Thyroid gland (tissue), 4 donors: ENCODE measurements at regions of chr19 and their contacts with region 1.

Region 1: GRCh38 chr19:14347999-14348889 is 33.0 kb upstream of the ADGRE5 start:
- DNase-seq: peak; percentile 43 to 53
- H3K4me3 ChIP-seq: no peak overlapping the region
- H3K27ac ChIP-seq: no peak overlapping the region
- H3K4me1 ChIP-seq: peaks cover 0 to 6% of the 10 kb centered on the region in 2 donors
- H3K27me3 ChIP-seq: no peaks in the 10 kb centered on the region
- CTCF ChIP-seq: peak; percentile 60 to 93 (median 84)
- POLR2A ChIP-seq: no peak

Region 2: DNA sequence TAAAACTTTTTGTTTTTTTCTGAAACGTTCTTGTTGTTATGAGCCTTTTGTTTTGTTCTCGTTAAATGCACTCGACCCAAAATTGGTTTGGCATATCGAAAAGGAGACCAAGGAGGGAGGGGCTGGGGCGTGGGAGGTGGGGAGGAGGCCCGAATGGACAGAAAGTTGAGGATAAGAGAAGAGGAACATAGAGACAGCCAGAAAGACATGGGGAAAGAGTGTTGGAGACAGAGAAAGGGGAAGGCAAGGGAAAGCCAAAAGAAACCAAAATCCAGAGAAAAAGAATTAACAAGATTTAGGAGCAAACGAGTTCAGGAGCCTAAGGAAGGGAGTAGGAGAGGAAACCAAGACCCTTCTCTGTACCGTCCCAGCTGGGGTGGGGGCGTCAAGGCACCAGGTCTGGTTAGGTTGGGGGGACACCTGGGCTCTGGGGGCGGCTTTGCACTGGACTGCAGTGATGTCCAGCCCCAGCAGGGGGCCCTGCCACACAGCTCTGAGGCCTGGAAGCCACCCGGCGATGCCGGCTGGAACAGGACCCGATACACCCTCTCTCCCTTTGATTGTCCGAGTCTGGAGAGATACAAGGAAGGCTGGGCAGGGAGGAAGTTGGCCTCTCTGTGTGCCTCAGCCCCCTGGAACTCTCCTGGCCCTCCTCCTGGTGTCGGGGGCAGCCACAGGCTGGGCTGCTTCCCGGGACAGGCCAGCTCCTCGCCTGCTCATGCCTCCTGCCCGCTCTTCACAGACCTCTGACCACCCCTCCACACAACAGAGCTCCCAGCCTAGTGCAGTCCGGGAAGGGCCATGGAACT is 200.2 kb before region 1 on chr19:
- intact Hi-C with region 1: loop called (anchors 5 kb)
- DNase-seq: peak; percentile 75 to 78
- H3K4me3 ChIP-seq: no peak overlapping the region
- H3K27ac ChIP-seq: peak overlapping the region in 2 of 3 donors; percentile 30 to 70
- H3K4me1 ChIP-seq: peaks cover 12 to 33% of the 10 kb centered on the region in 2 donors
- H3K27me3 ChIP-seq: no peaks in the 10 kb centered on the region
- CTCF ChIP-seq: peak; percentile 50 to 89 (median 78)
- POLR2A ChIP-seq: no peak

Region 3: DNA sequence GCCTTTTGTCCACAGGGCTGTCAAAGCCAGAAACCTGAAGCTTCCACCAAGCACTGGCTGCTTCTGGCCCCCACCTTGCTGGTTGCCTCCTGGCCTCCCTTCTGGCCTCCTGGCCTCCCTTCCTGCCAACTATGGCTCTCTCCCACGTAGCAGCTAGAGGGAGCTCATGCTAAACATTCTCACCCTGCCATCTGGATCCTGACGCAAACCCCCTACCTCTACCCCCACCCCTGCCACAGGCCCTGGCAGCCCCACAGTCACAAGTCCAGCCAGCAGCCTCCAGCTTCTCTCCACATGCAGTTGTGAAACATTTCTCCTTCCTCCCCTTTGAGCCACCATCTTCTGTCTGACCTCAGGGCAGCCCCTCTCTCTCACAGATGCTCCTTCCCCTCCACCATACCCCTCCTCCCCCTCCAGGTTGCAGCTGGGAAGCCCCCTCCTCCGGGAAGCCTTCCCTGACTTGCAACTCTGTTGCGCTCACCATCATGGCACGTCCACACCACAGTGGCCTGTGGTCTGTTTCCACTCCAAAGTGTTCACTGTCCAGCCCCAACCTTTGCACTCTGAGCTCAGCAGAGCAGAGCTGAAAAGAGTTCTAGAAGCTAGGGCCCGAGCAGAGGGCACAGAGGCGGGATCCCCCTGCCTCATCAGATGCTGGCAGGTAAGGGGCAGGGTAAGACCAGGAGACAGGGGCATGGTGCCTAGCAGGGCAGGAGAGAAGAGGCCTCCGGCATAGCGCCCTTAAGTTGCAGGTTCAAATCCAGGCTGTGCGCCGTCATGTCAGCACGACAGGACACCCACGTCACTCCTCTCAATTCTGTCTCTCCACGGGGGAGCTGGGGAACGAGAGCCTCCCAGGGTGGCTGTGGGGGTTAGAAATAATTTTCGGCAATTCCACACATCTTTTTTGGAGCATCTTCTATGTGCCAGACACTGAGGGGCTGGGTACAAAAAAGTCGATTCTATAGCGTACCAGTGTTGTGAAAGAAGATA is 149.6 kb before region 1 on chr19:
- intact Hi-C with region 1: loop called (anchors 10 kb)
- DNase-seq: no peak
- H3K4me3 ChIP-seq: no peak overlapping the region
- H3K27ac ChIP-seq: no peak overlapping the region
- H3K4me1 ChIP-seq: peaks cover 0 to 7% of the 10 kb centered on the region in 2 donors
- H3K27me3 ChIP-seq: no peaks in the 10 kb centered on the region
- CTCF ChIP-seq: no peak
- POLR2A ChIP-seq: no peak

Region 4: GRCh38 chr19:14519860-14520407 is 171.7 kb after region 1 on chr19:
- intact Hi-C with region 1: no loop called
- DNase-seq: no peak
- H3K4me3 ChIP-seq: no peak overlapping the region
- H3K27ac ChIP-seq: peak overlapping the region in 2 of 3 donors; percentile 91 to 100
- H3K4me1 ChIP-seq: peaks cover 19 to 32% of the 10 kb centered on the region in 2 donors
- H3K27me3 ChIP-seq: no peaks in the 10 kb centered on the region
- CTCF ChIP-seq: no peak
- POLR2A ChIP-seq: no peak